Transverse colon (tissue), 4 donors: ENCODE measurements at regions of chr17 and their contacts with region 1.

Region 1: DNA sequence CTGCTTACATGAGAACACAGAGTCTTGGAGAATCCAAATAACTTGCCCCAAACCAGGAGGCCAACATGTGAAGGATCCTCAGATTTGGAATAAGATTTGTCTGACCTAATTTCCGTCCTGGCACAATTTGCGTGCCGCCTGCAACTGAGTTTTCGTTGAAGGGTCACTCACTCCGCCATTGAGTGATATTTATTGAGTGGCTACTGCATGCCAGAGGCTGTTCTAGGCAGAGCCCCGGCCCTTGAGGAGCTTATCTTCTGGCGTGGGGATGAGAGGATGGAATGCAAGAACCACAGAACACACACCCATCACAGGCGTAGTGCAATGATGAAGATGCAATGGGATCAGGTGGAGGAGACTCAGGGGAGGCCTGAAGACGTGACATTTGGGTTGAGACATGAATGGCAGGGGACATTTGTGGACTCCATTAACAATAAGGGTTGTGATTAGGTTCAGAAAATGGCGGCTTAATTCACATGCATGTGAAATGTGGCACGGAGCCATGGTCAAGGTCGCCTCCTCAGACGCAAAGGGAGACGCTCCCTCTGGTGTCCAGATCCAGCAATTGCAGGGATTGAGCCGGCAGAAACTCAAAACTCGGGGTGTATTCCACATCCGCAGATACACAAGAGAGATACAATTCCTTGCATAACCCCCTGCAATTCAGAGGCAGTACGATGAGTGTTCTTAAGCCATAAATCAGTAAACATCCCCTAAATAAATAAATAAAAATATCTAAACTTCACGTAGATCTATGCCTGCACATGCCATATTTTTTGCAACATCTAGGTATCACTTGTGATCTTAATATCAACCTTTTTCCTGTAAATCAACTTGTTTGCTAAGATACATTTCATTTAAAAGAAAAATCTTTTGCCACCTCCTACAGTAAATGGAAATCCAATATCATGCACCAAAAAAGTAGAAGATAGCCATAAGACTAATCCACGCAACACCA is 57.9 kb upstream of the CACNG4 start:
- DNase-seq: peak; percentile 83
- H3K4me3 ChIP-seq: no peak overlapping the region
- H3K27ac ChIP-seq: no peak overlapping the region
- H3K4me1 ChIP-seq: peaks cover 0 to 8% (median 0%) of the 10 kb centered on the region in 4 donors
- H3K27me3 ChIP-seq: no peaks in the 10 kb centered on the region
- CTCF ChIP-seq: peak; percentile 84 to 90 (median 87)
- EP300 ChIP-seq: no peak
- POLR2A ChIP-seq: no peak

Region 2: DNA sequence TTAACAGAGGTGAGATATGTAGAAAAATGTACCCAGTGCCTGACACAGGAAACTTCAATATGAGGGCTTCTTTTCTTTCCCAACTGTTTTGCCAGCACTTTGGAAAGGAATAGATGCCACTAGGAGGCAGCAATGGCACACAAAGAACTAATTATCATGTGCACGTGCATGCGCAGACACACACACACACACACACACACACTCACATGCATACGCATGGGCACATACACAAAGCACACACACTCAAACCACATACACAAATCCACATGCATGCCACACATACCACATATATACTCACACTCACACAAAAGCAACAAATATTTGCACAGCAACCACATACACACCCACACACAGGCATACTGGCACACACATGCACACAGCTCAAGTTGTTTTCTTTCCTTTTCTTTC is 705.9 kb before region 1 on chr17:
- in situ Hi-C with region 1: loop called in 1 of 4 experiments (anchors 25 kb)
- intact Hi-C with region 1: no loop called
- DNase-seq: peak; percentile 59
- H3K4me3 ChIP-seq: no peak overlapping the region
- H3K27ac ChIP-seq: no peak overlapping the region
- H3K4me1 ChIP-seq: no peaks in the 10 kb centered on the region
- H3K27me3 ChIP-seq: no peaks in the 10 kb centered on the region
- CTCF ChIP-seq: peak; percentile 38 to 84 (median 50)
- EP300 ChIP-seq: no peak
- POLR2A ChIP-seq: no peak

Region 3: GRCh38 chr17:66691644-66692420 is 214.8 kb before region 1 on chr17:
- in situ Hi-C with region 1: no loop called
- intact Hi-C with region 1: no loop called
- DNase-seq: no peak
- H3K4me3 ChIP-seq: no peak overlapping the region
- H3K27ac ChIP-seq: peak overlapping the region; percentile 36 to 59 (median 42)
- H3K4me1 ChIP-seq: peaks cover 0 to 43% (median 20%) of the 10 kb centered on the region in 4 donors
- H3K27me3 ChIP-seq: no peaks in the 10 kb centered on the region
- CTCF ChIP-seq: no peak
- EP300 ChIP-seq: no peak
- POLR2A ChIP-seq: peak; percentile 20

Region 4: GRCh38 chr17:66715745-66716156 is 190.8 kb before region 1 on chr17:
- in situ Hi-C with region 1: loop called (anchors 5 to 10 kb)
- intact Hi-C with region 1: loop called (anchors 5 kb)
- DNase-seq: no peak
- H3K4me3 ChIP-seq: peak overlapping the region in 1 of 4 donors; percentile 13
- H3K27ac ChIP-seq: peak overlapping the region; percentile 76 to 85 (median 84)
- H3K4me1 ChIP-seq: peaks cover 9 to 50% (median 28%) of the 10 kb centered on the region in 4 donors
- H3K27me3 ChIP-seq: no peaks in the 10 kb centered on the region
- CTCF ChIP-seq: peak; percentile 63 to 84 (median 70)
- EP300 ChIP-seq: no peak
- POLR2A ChIP-seq: no peak

Region 5: GRCh38 chr17:67157732-67158639 is 251.4 kb after region 1 on chr17:
- in situ Hi-C with region 1: loop called in 1 of 4 experiments (anchors 25 kb)
- intact Hi-C with region 1: no loop called
- DNase-seq: no peak
- H3K4me3 ChIP-seq: no peak overlapping the region
- H3K27ac ChIP-seq: no peak overlapping the region
- H3K4me1 ChIP-seq: no peaks in the 10 kb centered on the region
- H3K27me3 ChIP-seq: no peaks in the 10 kb centered on the region
- CTCF ChIP-seq: peak in 2 of 5 experiments; percentile 8 to 18
- EP300 ChIP-seq: no peak
- POLR2A ChIP-seq: no peak